ENCODE measurements at regions of chr3 and their contacts with region 1.

Region 1: DNA sequence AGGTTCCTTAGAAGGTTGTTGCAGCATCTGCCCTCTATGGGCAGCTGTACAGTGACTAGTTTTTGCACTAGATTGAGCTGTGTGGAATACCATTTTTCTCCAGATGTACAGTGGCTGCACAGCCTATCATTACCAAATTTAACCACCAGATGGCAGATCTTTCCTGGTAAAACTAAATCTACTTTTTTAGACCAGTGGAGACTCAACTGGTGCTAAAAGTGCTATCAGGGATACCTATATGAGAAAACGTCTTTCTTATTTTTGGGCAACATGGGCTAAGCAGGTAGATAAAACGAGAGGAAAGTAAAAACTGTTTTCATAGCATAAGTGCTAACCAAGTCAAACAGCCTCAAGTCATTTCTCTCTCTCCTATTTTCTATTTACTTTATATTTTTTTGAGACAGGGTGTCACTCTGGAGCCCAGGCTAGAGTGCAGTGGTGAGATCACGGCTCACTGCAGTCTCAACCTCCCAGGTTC is 21.2 kb downstream of the IGSF10 start:
- DNase-seq: no peak
- ATAC-seq: peak; percentile 81
- H3K4me3 Mint-ChIP-seq: no peak overlapping the region
- H3K27ac Mint-ChIP-seq: no peak overlapping the region
- H3K4me1 Mint-ChIP-seq: peaks cover 3% of the 10 kb centered on the region
- H3K27me3 Mint-ChIP-seq: no peaks in the 10 kb centered on the region
- CTCF ChIP-seq: no peak

Region 2: DNA sequence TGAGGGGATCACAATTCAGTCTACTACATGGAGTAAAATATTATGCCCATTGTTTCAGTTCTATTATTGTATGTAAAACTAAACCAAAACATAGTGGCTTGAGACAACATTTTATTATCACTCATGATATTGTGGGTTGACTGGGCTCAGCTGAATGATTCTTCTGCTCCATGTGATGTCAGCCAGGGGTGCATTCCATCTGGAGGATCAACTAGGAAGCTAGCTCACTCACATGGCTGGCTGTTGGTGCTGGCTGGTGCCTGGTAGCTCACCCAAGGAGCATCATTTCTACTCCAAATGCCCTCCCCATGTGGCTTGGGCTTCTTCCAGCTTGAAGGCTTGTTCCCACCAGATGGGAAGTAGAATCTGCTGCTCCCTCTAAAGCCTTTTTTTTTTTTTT is 415.4 kb before region 1 on chr3:
- CTCF ChIA-PET with region 1: no interaction called
- POLR2A ChIA-PET with region 1: no interaction called
- intact Hi-C with region 1: no loop called
- DNase-seq: no peak
- ATAC-seq: no peak
- H3K4me3 Mint-ChIP-seq: no peak overlapping the region
- H3K27ac Mint-ChIP-seq: no peak overlapping the region
- H3K4me1 Mint-ChIP-seq: no peaks in the 10 kb centered on the region
- H3K27me3 Mint-ChIP-seq: no peaks in the 10 kb centered on the region
- CTCF ChIP-seq: no peak

Region 3: DNA sequence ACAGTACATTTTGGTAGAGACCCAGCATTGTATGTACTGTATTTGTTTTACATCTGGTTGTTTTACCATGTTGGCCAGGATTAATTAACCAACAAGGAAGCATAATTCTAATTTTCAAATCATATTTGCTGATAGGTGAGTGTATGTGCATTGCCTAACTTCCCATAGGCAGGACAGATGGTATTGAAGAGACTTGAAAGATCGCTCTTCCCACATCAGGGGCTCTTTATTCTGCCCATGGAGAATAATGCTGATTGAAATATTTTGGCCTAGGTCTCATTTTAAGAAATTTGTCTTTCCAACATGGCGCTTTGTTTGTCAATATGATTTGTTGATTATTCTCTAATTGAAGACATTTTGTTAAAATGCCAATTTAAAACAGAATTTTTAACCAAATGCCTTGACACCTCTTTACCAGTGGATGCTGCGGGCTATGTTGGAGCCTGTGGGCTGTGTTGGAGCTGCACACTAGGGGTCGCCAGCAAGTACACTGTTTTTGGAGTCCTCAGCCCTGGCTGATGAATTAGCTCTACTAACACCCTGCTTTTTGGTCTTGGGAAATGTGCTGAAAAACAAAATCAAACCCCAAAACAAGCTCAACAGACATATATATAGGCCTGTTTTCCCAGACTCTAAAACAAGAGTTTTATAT is 60.5 kb before region 1 on chr3:
- CTCF ChIA-PET with region 1: interaction called, 4 read pairs
- POLR2A ChIA-PET with region 1: no interaction called
- intact Hi-C with region 1: loop called (anchors 2 kb)
- DNase-seq: no peak
- ATAC-seq: peak; percentile 59
- H3K4me3 Mint-ChIP-seq: no peak overlapping the region
- H3K27ac Mint-ChIP-seq: peak overlapping the region; percentile 66
- H3K4me1 Mint-ChIP-seq: peaks cover 54% of the 10 kb centered on the region
- H3K27me3 Mint-ChIP-seq: no peaks in the 10 kb centered on the region
- CTCF ChIP-seq: no peak

Region 4: DNA sequence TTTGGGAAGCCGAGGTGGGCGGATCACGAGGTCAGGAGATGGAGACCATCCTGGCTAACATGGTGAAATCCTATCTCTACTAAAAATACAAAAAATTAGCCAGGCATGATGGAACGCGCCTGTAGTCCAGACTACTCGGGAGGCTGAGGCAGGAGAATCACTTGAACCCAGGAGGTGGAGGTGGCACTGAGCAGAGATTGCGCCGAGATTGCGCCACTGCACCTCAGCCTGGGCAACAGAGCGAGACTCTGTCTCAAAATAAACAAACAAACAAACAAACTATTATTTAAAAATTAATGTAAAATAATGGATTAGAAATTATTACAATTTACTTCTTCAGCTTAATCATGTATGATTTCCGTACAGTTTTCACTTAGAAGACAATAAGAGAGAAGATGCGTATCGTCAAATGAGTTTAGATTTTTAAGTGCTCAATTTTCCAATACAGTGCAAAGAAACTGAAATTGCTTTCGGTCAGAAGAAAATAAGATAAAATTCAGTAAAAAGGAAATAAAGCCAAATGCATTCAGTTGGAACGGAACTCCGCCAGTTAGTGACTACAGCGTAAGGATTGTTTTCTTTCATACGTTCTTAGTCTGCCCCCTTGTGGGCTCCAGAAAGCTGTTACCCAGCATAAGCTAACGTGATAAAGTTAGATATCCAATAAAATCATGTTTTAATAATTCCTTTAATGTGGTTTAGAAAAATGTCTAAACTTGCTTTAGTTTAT is 399.1 kb after region 1 on chr3:
- CTCF ChIA-PET with region 1: interaction called, 41 read pairs
- POLR2A ChIA-PET with region 1: no interaction called
- intact Hi-C with region 1: loop called (anchors 1 kb)
- DNase-seq: no peak
- ATAC-seq: peak; percentile 68
- H3K4me3 Mint-ChIP-seq: no peak overlapping the region
- H3K27ac Mint-ChIP-seq: no peak overlapping the region
- H3K4me1 Mint-ChIP-seq: no peaks in the 10 kb centered on the region
- H3K27me3 Mint-ChIP-seq: peaks cover 3% of the 10 kb centered on the region
- CTCF ChIP-seq: peak; percentile 55

Region 5: DNA sequence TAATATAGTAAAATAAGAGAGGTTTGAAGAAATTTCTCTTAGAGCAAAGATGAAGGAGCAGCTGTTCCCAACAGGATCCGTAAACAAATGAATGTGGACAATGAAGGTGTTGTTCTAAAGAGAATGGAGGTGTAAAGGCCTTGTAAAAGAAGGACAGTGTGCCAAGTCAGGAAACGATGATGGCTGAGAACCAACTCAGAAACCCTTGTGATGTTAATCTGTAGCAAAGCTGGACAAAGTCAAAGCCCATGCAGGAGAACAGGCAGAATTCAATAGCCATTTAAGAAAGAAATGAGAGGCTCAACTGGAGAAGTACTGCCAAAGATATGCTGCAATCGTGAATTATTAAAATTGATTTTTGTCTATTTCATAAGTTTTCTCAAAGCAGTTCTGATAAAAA is 1021.2 kb after region 1 on chr3:
- CTCF ChIA-PET with region 1: no interaction called
- POLR2A ChIA-PET with region 1: no interaction called
- intact Hi-C with region 1: no loop called
- DNase-seq: no peak
- ATAC-seq: no peak
- H3K4me3 Mint-ChIP-seq: no peak overlapping the region
- H3K27ac Mint-ChIP-seq: peak overlapping the region; percentile 61
- H3K4me1 Mint-ChIP-seq: peaks cover 22% of the 10 kb centered on the region
- H3K27me3 Mint-ChIP-seq: no peaks in the 10 kb centered on the region
- CTCF ChIP-seq: no peak

Region 6: DNA sequence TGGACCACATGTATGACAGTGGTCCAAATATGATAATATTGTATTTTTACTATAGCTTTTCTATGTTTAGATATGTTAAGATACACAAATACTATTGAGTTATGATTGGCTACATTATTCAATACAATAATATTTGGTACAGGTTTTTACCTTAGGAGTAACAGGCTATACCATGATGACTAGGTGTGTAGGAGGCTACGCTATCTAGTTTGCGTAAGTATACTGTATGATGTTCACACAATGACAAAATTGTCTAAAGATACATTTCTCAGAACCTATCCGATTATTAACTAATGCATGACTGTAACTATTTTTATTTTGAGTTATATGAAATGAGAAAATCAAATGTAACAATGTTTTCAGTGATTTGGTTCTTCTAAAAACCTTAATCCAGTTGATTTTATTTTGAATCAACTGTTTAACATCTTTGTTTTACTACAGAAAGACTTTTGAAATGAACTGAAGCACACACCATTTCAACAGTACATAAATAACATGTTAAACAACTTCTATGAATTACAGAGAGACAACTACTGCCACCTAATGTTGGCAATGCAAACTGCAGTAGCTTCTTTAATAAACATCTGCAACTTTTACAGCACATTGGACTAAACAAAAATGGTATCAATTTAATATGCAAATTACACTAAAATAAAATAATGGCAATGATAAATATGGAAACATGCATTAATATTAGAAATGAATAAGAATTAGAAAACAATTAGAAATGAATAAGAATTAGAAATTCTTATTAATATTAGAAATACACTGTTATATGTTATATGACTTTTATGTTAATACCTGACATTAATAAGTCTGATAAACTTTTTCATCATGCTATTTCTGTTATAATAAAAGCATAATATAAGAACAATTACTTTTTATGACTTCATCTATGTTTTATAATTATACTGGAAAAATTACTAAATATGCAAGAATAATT is 1084.8 kb after region 1 on chr3:
- CTCF ChIA-PET with region 1: interaction called, 3 read pairs
- POLR2A ChIA-PET with region 1: no interaction called
- intact Hi-C with region 1: loop called (anchors 1 kb)
- DNase-seq: no peak
- ATAC-seq: peak; percentile 77
- H3K4me3 Mint-ChIP-seq: no peak overlapping the region
- H3K27ac Mint-ChIP-seq: no peak overlapping the region
- H3K4me1 Mint-ChIP-seq: peaks cover 33% of the 10 kb centered on the region
- H3K27me3 Mint-ChIP-seq: no peaks in the 10 kb centered on the region
- CTCF ChIP-seq: peak; percentile 96